HEK293 (cell line): ENCODE measurements at regions of chr9 and their contacts with region 1.

Region 1: GRCh38 chr9:122350638-122351355 is 20.0 kb upstream of the PTGS1 start:
- H3K4me3 ChIP-seq: no peak overlapping the region
- H3K27ac ChIP-seq: no peak overlapping the region
- H3K4me1 ChIP-seq: no peaks in the 10 kb centered on the region
- CTCF ChIP-seq: peak; percentile 90

Region 2: GRCh38 chr9:122131401-122132001 is 219.3 kb before region 1 on chr9:
- CTCF ChIA-PET with region 1: interaction called, 473 read pairs
- POLR2A ChIA-PET with region 1: no interaction called
- H3K4me3 ChIP-seq: no peak overlapping the region
- H3K27ac ChIP-seq: no peak overlapping the region
- H3K4me1 ChIP-seq: 0 out of 2 replicates have a peak, but pooled peaks cover 3% of the 10 kb centered on the region
- CTCF ChIP-seq: no peak

Region 3: DNA sequence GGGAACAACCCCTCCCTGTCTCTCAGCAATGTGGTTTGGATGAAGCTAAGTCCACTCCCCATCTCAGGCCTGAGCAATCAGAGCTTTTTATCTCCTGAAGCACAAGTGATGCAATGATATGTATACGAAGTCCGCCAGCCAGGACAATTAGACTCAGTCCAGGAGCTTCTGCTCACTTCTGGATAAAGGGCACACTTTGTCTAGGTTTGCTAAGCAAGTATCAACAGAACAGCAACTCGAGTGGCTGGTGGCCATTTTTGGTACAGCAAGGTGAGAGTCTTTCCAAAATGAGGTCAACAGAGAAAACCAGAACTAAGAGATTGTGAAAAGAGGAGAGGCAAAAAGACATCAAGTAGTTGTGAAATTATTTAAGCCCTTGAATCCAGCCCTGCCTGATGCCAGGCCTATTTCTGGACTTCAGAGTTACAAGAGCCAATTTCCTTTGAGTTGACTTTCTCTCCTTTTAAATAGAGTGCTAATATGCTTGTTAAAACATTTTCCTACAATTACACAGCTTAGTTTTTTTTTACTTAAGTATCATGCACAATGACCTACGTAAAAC is 199.4 kb before region 1 on chr9:
- CTCF ChIA-PET with region 1: interaction called, 11 read pairs
- POLR2A ChIA-PET with region 1: no interaction called
- H3K4me3 ChIP-seq: no peak overlapping the region
- H3K27ac ChIP-seq: no peak overlapping the region
- H3K4me1 ChIP-seq: no peaks in the 10 kb centered on the region
- CTCF ChIP-seq: no peak

Region 4: DNA sequence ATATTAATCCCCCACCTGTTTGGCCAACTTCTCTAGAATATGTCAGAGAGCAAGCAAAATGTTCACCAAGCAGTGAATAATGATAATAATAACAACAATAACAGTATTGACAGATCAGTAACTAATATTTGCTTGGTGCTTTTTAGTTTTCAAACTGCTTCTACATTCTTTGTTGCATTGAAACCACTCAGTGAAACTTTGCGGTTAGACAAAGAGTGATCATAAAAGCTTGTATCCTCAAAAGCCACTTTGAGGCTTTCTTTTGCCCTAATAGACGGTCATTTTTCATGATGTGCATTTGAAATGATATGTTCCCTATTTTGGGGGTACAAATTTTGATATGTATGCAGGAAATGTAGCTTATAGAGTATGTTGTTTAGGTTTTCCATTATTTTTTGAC is 23.6 kb before region 1 on chr9:
- CTCF ChIA-PET with region 1: interaction called, 15 read pairs
- POLR2A ChIA-PET with region 1: interaction called, 5 read pairs
- H3K4me3 ChIP-seq: no peak overlapping the region
- H3K27ac ChIP-seq: no peak overlapping the region
- H3K4me1 ChIP-seq: no peaks in the 10 kb centered on the region
- CTCF ChIP-seq: no peak

Region 5: DNA sequence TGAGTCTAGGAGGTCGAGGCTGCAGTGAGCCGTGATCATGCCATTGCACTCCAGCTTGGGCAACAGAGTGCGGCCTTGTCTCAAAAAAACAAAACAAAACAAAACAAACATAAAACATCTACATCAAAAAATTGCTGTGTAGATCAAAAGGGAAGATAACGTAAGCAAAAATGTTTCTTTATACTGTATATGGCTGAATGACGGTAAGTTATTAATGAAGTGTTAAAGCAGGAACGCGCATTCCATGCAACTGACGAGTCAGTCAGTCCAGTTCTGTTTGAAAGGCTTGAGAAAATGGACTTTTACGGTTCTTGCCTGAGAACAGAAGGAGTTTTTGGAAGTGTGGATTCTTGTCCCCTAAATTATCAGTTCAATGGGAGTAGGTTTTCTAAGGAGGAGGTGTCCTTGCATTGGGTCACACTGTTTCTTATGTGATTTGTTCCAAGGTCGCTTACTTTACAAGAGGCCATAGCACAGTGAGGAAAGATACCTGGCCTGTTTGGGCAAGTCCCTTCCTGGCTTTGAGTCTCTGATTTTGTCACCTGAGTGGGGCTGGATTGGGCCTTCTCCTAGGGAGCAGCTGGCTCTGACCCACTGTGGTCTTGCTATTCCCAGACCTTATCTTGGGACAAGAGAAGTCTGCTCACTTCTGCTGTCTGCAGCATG is 13.5 kb after region 1 on chr9:
- CTCF ChIA-PET with region 1: interaction called, 15 read pairs
- POLR2A ChIA-PET with region 1: no interaction called
- H3K4me3 ChIP-seq: no peak overlapping the region
- H3K27ac ChIP-seq: no peak overlapping the region
- H3K4me1 ChIP-seq: no peaks in the 10 kb centered on the region
- CTCF ChIP-seq: no peak

Region 6: GRCh38 chr9:122562134-122562760 is 211.4 kb after region 1 on chr9:
- CTCF ChIA-PET with region 1: no interaction called
- POLR2A ChIA-PET with region 1: no interaction called
- H3K4me3 ChIP-seq: no peak overlapping the region
- H3K27ac ChIP-seq: no peak overlapping the region
- H3K4me1 ChIP-seq: no peaks in the 10 kb centered on the region
- CTCF ChIP-seq: no peak

Region 7: DNA sequence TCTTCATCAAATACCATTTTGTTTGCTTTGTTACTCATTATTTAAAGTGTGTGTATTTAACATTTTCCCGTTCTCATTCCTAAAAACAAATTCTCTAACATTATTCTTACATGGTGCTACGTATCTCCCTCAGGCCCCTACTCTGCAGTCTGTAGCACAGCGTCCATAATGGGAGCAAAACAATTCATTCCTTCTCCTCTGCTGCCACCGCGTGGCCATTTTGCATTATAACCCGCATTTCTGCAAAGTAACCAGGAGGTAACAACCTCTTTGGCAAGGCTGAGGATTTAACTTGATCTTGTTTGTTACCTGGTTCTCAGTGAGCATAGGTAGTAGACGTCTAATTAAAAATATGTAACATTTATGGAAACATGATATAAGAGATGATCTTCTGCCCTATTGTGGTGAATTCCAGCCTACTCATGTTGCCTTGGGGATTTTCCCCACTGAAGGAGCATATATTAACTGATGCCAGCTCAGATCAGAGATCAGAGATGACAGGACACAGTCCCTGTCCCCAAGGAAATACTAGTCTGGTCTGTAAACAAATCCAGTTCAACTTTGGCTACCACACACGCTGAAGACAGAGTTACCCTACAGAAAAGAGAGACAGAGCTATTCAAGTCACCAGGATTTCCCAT is 459.6 kb after region 1 on chr9:
- CTCF ChIA-PET with region 1: interaction called, 15 read pairs
- POLR2A ChIA-PET with region 1: no interaction called
- H3K4me3 ChIP-seq: no peak overlapping the region
- H3K27ac ChIP-seq: no peak overlapping the region
- H3K4me1 ChIP-seq: no peaks in the 10 kb centered on the region
- CTCF ChIP-seq: peak; percentile 62; the same call in 1 of the 2 replicates